Transverse colon (tissue), 4 donors: ENCODE measurements at regions of chr19 and their contacts with region 1.

Region 1: DNA sequence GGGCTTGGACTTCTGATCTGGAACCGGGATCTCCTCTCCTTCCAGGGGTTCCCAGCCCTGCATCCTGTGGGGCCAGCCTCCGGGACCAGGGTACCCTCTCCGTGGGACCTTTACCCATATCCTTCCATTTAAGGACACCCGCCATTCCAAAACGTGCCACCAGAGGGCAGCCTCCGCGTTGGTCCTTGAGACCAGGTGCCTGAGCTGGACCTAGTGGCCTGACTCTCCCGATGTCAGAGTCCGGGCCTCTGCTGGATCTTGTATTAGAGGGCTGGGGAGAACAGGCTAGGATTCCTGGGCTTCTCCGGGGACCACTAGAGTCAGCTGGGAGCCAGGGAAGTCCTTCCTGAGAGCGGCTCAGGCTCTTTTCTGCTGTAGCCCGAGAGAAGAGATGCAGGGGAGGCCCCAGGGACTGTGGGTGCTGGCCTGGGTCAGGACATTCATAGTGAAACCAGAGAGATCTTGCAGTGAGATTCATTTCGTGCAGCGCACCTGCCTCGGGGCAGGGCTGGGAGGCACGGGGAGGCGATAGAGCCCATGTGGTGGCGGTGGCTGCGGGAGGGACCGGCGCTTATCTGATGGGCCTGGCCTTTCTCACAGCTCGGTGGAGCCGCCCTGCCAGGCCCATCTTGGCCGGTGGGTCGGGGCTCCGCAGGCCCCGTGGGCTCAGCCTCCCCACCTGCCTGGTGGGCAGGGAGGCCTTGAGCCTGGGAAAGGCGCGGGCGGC is 9.8 kb upstream of the SLC7A10 start:
- DNase-seq: peak; percentile 87
- H3K4me3 ChIP-seq: peak overlapping the region in 1 of 4 donors; percentile 5
- H3K27ac ChIP-seq: no peak overlapping the region
- H3K4me1 ChIP-seq: peaks cover 0 to 7% (median 0%) of the 10 kb centered on the region in 4 donors
- H3K27me3 ChIP-seq: no peaks in the 10 kb centered on the region
- CTCF ChIP-seq: peak; percentile 92 to 95 (median 93)
- EP300 ChIP-seq: no peak
- POLR2A ChIP-seq: no peak

Region 2: GRCh38 chr19:33098023-33098652 is 137.3 kb before region 1 on chr19:
- in situ Hi-C with region 1: no loop called
- intact Hi-C with region 1: no loop called
- DNase-seq: peak; percentile 39
- H3K4me3 ChIP-seq: no peak overlapping the region
- H3K27ac ChIP-seq: no peak overlapping the region
- H3K4me1 ChIP-seq: peaks cover 0 to 18% (median 5%) of the 10 kb centered on the region in 4 donors
- H3K27me3 ChIP-seq: no peaks in the 10 kb centered on the region
- CTCF ChIP-seq: no peak
- EP300 ChIP-seq: no peak
- POLR2A ChIP-seq: no peak

Region 3: GRCh38 chr19:33176670-33177416 is 58.6 kb before region 1 on chr19:
- in situ Hi-C with region 1: loop called in 1 of 4 experiments (anchors 5 kb)
- intact Hi-C with region 1: no loop called
- DNase-seq: peak; percentile 96
- H3K4me3 ChIP-seq: peak overlapping the region; percentile 41 to 89 (median 71)
- H3K27ac ChIP-seq: peak overlapping the region; percentile 90 to 95 (median 94)
- H3K4me1 ChIP-seq: peaks cover 9 to 33% (median 24%) of the 10 kb centered on the region in 4 donors
- H3K27me3 ChIP-seq: no peaks in the 10 kb centered on the region
- CTCF ChIP-seq: peak in 3 of 5 experiments; percentile 23 to 50 (median 49)
- EP300 ChIP-seq: no peak
- POLR2A ChIP-seq: peak; percentile 91

Region 4: GRCh38 chr19:33302175-33302973 is 66.9 kb after region 1 on chr19 and contains the start of gene CEBPA:
- in situ Hi-C with region 1: no loop called
- intact Hi-C with region 1: loop called (anchors 10 kb)
- DNase-seq: peak; percentile 88
- H3K4me3 ChIP-seq: peak within 1 kb of the TSS; percentile 55 to 78 (median 73)
- H3K27ac ChIP-seq: peak within 1 kb of the TSS; percentile 90 to 94 (median 92)
- H3K4me1 ChIP-seq: peaks cover 7 to 65% (median 26%) of the 10 kb centered on the region in 4 donors
- H3K27me3 ChIP-seq: peaks cover 9% of the 10 kb centered on the region
- CTCF ChIP-seq: peak in 4 of 5 experiments; percentile 25 to 49 (median 33)
- EP300 ChIP-seq: no peak
- POLR2A ChIP-seq: peak; percentile 73
- total RNA-seq, gene CEBPA: 69.4 to 84.2 (median 77.3) TPM

Region 5: DNA sequence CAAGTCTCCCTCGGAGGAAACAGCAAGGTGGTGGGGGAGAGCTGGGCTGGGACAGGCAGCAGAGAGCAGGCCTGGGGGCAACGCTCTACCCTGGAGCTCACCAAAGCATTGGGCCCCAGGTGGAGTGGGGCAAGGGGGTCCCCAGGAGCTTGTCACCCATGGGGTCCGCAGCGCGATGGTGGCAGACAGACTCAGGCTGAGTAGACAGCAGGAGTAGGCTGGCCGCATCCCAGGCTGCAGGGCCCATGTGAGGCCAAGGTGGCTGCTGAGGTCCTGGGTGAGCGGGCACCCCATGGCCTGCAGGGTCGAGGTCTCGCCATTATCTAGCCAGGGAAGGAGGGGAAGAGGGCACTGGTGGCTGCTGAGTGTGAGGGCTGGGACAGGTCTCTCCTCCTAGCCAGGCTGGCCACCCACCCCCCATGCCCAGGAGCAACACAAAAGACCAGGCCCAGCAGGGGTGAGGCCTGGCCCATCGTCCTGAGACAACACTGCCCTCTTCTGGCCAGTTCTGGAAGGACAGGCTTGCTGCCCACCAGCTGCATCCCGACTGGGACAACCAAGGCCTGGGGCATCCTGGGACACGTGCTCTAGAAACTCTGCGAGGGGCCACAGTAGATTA is 171.2 kb after region 1 on chr19:
- in situ Hi-C with region 1: loop called (anchors 5 kb)
- intact Hi-C with region 1: loop called (anchors 2 kb)
- DNase-seq: peak; percentile 82
- H3K4me3 ChIP-seq: no peak overlapping the region
- H3K27ac ChIP-seq: no peak overlapping the region
- H3K4me1 ChIP-seq: peaks cover 0 to 10% (median 4%) of the 10 kb centered on the region in 4 donors
- H3K27me3 ChIP-seq: no peaks in the 10 kb centered on the region
- CTCF ChIP-seq: peak; percentile 93 to 97 (median 96)
- EP300 ChIP-seq: no peak
- POLR2A ChIP-seq: no peak

Region 6: GRCh38 chr19:33771384-33772101 is 536.1 kb after region 1 on chr19:
- in situ Hi-C with region 1: loop called in 3 of 4 experiments (anchors 10 to 25 kb)
- intact Hi-C with region 1: loop called (anchors 5 kb)
- DNase-seq: peak; percentile 73
- H3K4me3 ChIP-seq: no peak overlapping the region
- H3K27ac ChIP-seq: no peak overlapping the region
- H3K4me1 ChIP-seq: no peaks in the 10 kb centered on the region
- H3K27me3 ChIP-seq: peaks cover 7% of the 10 kb centered on the region
- CTCF ChIP-seq: peak; percentile 82 to 88 (median 86)
- EP300 ChIP-seq: no peak
- POLR2A ChIP-seq: no peak